Left cardiac atrium (tissue), 4 donors: ENCODE measurements at regions of chr13 and their contacts with region 1.

Region 1: DNA sequence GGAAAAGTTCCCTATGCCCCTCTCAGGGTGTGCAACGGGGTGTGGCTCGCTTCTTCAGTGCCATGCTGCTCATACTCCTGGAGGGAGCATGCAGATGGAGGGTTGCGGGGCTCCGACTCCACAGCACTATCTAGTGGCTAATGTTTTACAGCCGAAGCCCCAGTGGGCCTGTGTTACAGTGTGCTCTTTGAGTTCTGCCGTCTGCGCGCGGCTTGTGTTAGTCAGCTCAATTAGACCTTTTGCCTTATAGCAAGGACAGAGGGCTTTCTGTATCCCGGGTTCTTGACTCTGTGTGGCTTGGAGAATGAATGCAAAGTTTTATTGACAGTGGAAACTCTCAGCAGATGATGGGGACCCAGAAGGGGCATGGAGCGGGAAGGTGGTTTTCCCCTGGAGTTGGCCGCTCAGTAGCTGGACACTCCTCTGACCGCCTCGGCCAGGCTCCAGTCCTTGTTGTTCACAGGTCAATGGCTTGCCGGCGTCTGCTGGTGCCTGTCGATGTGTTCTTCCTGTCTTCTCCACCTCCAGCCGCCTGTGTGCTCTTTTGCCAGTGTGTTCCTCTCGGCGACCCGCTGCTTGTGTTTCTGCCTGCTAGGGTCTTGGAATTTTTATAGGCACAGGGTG is 383.4 kb downstream of the LMO7 start:
- DNase-seq: peak; percentile 22
- ATAC-seq: peak in 1 of 2 donors; percentile 44

Region 2: GRCh38 chr13:75908141-75908540 is 111.4 kb before region 1 on chr13:
- intact Hi-C with region 1: loop called in 1 of 2 experiments (anchors 5 kb)
- DNase-seq: no peak
- ATAC-seq: peak; percentile 81 to 83

Region 3: DNA sequence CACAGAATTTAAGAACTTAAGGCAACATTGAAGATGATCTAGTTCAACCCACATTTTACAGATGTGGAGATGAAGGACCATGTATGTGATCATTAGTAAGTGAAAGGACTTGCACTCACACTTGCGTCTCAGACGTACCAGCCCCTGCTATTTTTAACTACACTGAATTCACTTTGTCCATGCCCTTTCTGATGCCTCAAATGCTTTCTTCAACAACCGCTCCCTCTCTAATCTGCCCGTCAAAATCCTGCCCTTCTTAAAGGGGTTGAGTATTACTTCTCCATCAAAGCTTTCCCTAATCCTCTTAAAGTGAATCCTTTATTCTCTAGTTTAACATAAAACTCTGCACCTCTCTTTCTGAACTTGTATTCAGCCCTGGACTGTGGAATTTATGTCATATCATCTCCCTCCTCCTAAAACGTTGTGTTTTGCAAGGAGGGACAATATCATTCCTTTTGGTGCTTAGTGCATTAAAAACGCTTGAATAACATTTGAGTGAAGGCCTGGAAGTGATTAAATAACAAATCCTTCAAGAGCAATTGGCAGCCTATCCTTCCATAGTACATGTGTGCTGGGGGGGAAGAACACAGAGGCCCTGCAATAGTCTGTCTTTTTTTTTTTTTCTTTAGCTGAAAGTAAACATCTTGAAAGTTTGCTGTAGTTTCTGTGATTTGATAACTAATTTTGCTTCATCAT is 109.9 kb after region 1 on chr13:
- intact Hi-C with region 1: loop called in 1 of 2 experiments (anchors 10 kb)
- DNase-seq: no peak
- ATAC-seq: no peak